CD8-positive, alpha-beta memory T cell (primary cell): ENCODE measurements at regions of chr12 and their contacts with region 1.

Region 1: DNA sequence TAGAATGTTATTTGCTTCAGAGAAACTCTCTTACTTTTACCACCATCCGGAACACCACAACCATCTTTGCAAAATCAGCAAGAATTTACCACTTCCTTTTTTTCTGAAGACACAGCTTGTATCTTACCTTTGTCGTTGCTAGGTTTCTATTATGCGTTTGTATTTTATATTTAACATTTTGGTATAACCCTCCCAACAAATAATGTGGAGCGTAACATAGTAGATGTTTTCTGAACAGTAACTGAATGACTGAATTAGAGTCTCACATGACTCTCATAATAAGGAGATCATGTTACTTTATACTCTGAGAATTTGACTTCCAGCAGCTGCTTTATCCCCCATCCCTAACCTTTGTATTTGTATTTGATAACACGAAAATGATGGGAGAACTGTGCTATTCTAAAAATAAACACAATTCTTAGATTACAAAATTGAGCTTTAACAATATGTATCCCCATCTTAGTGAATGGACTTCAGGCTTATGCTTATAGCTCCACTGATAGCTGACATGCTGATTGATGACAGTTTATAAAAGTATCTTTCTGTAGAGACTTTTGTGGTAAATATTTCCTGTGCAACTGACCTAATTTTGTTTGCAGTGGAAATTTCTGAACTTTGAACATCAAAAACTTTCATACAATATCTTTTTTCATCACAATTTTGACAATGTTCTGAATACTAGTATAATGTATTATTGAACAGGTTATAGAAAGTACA is 7.9 kb upstream of the KLRB1 start:
- DNase-seq: peak in 3 of 5 donors; percentile 46 to 71 (median 67)
- H3K4me3 ChIP-seq: peak overlapping the region; percentile 25
- H3K4me3 Mint-ChIP-seq: peak overlapping the region; percentile 84 to 91 (median 87)
- H3K27ac ChIP-seq: peak overlapping the region; percentile 86
- H3K27ac Mint-ChIP-seq: peak overlapping the region; percentile 70 to 100 (median 98)
- H3K4me1 ChIP-seq: peaks cover 35% of the 10 kb centered on the region
- H3K4me1 Mint-ChIP-seq: peaks cover 84 to 96% (median 94%) of the 10 kb centered on the region in 3 donors
- H3K27me3 ChIP-seq: no peaks in the 10 kb centered on the region
- H3K27me3 Mint-ChIP-seq: no peaks in the 10 kb centered on the region

Region 2: DNA sequence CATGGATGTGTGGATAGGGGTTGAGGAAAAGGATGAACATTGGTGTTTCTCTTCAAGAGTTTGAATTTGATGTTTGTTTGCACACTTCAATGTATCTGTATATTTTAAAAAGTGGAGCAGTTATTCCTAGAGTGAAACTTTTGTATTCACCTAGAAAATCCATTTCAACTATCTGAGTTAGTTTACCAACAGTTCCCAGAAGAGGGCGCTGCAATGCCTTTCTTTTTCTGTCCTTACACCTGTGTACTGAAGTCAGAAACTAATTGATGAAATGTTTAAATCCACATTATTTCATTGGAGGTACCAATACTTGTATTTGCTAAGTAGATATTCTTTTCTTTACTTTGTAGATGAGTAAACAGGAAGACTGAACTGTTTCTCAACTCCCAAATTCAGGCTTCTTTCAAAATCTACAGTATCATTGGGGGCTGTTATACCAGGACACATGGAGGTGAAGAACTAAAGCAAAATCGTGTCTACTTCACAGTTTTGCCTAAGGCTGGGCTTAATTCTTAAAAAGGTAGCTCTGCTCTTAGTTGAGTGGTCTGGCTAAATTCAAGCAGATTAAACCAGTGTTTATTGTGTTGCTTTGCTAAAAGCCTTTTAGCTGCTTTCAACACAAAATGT is 18.7 kb after region 1 on chr12:
- CTCF ChIA-PET with region 1: interaction called, 12 read pairs
- POLR2A ChIA-PET with region 1: no interaction called
- DNase-seq: peak; percentile 64 to 80 (median 68)
- H3K4me3 ChIP-seq: peak overlapping the region; percentile 1
- H3K4me3 Mint-ChIP-seq: peak overlapping the region in 5 of 7 donors; percentile 18 to 63 (median 43)
- H3K27ac ChIP-seq: no peak overlapping the region
- H3K27ac Mint-ChIP-seq: peak overlapping the region; percentile 11 to 93 (median 88)
- H3K4me1 ChIP-seq: peaks cover 57% of the 10 kb centered on the region
- H3K4me1 Mint-ChIP-seq: peaks cover 44 to 83% (median 79%) of the 10 kb centered on the region in 3 donors
- H3K27me3 ChIP-seq: no peaks in the 10 kb centered on the region
- H3K27me3 Mint-ChIP-seq: peaks cover 0 to 2% of the 10 kb centered on the region in 2 donors

Region 3: DNA sequence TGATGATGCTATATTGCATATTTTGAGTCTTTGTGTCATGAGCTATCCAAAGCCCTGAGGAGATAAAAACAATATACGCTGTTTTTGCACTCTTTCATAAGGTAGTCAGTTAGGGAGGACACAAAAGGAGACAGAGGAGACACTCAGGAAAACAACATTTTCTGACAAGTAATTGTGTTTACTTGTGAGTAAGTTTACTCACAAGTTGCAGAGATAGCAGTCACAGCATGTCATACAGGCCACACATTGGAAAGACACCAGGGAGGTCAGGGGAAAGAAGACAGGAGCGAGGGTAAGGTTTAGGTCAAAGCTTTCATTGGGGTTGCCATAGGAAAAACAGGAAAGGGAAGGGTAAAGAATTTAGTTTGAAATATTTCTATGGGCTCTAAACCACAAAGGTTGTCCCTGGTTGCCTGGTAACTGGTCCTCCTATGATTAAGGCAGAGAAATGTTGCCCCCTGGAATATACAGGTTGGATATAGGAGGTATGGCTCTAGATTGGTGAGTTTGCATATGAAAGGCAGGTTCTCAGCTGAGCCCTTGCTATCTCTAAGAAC is 589.8 kb after region 1 on chr12:
- CTCF ChIA-PET with region 1: no interaction called
- POLR2A ChIA-PET with region 1: no interaction called
- DNase-seq: no peak
- H3K4me3 ChIP-seq: no peak overlapping the region
- H3K4me3 Mint-ChIP-seq: no peak overlapping the region
- H3K27ac ChIP-seq: no peak overlapping the region
- H3K27ac Mint-ChIP-seq: no peak overlapping the region
- H3K4me1 ChIP-seq: no peaks in the 10 kb centered on the region
- H3K4me1 Mint-ChIP-seq: no peaks in the 10 kb centered on the region
- H3K27me3 ChIP-seq: no peaks in the 10 kb centered on the region
- H3K27me3 Mint-ChIP-seq: peaks cover 0 to 4% of the 10 kb centered on the region in 2 donors